Naive thymus-derived CD4-positive, alpha-beta T cell (primary cell): ENCODE measurements at regions of chr5 and their contacts with region 1.

Region 1: DNA sequence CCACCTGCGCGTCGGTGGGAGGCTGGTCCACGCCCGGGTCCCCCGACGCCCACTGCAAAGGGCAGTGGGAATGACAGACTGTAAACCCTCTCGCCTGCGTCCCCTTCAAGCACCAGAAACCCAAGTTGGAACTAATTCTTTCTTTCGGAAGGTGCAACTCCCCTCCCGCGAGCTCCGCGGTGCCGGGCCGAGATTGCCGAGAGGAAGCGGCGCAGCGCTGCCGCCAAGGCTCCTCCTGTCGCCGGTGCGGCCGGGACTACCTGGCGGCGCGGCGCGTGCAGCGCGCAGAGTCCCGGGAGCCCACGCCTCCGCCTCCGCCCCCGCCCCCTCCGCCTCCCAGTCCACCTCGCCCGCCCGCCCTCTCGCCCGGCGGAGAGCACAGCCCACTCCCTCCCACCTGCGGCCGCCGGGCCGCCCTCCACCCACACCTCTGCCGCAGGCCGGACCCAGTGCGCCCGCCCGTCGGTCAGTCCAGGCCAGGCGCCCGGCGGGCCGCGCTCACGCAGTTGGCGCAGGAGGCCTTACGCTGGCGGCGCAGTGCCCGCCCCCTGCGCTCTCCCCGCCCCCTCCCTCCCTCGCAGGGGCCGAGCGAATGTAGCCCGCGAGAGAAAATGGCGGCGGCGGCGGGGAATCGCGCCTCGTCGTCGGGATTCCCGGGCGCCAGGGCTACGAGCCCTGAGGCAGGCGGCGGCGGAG is at the start of gene MAP3K1:
- DNase-seq: peak; percentile 75 to 92 (median 86)
- ATAC-seq: peak; percentile 83
- H3K4me3 ChIP-seq: peak within 1 kb of the TSS; percentile 95
- H3K4me3 Mint-ChIP-seq: peak within 1 kb of the TSS; percentile 93 to 97 (median 95)
- H3K27ac ChIP-seq: peak within 1 kb of the TSS; percentile 83
- H3K27ac Mint-ChIP-seq: peak within 1 kb of the TSS; percentile 91 to 97 (median 93)
- H3K4me1 ChIP-seq: peaks cover 8 to 17% of the 10 kb centered on the region in 2 donors
- H3K4me1 Mint-ChIP-seq: peaks cover 23 to 47% (median 41%) of the 10 kb centered on the region in 7 donors
- H3K27me3 ChIP-seq: no peaks in the 10 kb centered on the region
- H3K27me3 Mint-ChIP-seq: peaks cover 0 to 6% (median 0%) of the 10 kb centered on the region in 5 donors
- total RNA-seq, gene MAP3K1: 54.4 to 85.4 (median 77.3) TPM

Region 2: GRCh38 chr5:56270568-56271392 is 544.3 kb before region 1 on chr5:
- CTCF ChIA-PET with region 1: interaction called, 3 read pairs
- POLR2A ChIA-PET with region 1: interaction called, 5 read pairs
- intact Hi-C with region 1: loop called (anchors 1 kb)
- DNase-seq: peak; percentile 47 to 73 (median 68)
- ATAC-seq: peak; percentile 97
- H3K4me3 ChIP-seq: no peak overlapping the region
- H3K4me3 Mint-ChIP-seq: peak overlapping the region; percentile 37 to 88 (median 76)
- H3K27ac ChIP-seq: no peak overlapping the region
- H3K27ac Mint-ChIP-seq: peak overlapping the region in 7 of 9 donors; percentile 44 to 86 (median 67)
- H3K4me1 ChIP-seq: peaks cover 0 to 9% of the 10 kb centered on the region in 2 donors
- H3K4me1 Mint-ChIP-seq: peaks cover 12 to 33% (median 21%) of the 10 kb centered on the region in 7 donors
- H3K27me3 ChIP-seq: no peaks in the 10 kb centered on the region
- H3K27me3 Mint-ChIP-seq: peaks cover 0 to 6% (median 0%) of the 10 kb centered on the region in 5 donors

Region 3: GRCh38 chr5:56610093-56610698 is 204.9 kb before region 1 on chr5:
- CTCF ChIA-PET with region 1: no interaction called
- POLR2A ChIA-PET with region 1: interaction called, 4 read pairs
- intact Hi-C with region 1: loop called in 1 of 2 experiments (anchors 5 kb)
- DNase-seq: peak in 1 of 9 donors; percentile 29
- ATAC-seq: peak; percentile 41
- H3K4me3 ChIP-seq: no peak overlapping the region
- H3K4me3 Mint-ChIP-seq: peak overlapping the region in 7 of 10 donors; percentile 12 to 80 (median 39)
- H3K27ac ChIP-seq: no peak overlapping the region
- H3K27ac Mint-ChIP-seq: peak overlapping the region in 8 of 9 donors; percentile 3 to 79 (median 74)
- H3K4me1 ChIP-seq: peaks cover 20 to 58% of the 10 kb centered on the region in 2 donors
- H3K4me1 Mint-ChIP-seq: peaks cover 56 to 93% (median 89%) of the 10 kb centered on the region in 7 donors
- H3K27me3 ChIP-seq: no peaks in the 10 kb centered on the region
- H3K27me3 Mint-ChIP-seq: no peaks in the 10 kb centered on the region

Region 4: DNA sequence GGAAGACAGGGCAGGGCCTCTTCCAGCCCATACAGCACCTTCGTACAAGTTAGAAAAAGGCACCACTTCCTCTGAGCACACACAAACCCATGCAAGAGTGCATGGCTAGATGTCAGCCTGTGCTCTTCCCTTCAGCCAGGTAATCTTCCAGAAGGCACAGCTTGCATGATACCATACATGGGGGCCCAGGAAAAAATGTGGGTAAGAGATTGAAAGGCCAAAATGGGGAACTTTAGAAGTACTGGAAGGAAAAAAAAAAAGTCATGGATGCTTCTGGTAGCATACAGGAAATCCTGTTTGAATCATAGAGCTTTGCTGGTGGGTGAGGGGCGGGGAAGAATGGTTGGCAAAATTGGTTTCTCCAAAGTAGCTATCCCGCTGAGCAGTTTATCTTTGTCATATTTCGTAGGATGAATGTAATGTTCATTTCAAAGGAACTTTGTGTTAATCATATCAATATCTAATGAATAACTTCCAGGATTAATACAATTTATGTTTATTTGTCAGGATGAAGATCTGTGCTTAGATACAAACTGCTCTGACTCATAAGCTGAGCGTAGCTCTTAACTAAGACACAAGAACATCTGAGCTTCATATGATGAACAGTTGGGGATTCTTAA is 78.0 kb before region 1 on chr5:
- CTCF ChIA-PET with region 1: interaction called, 3 read pairs
- POLR2A ChIA-PET with region 1: interaction called, 4 read pairs
- intact Hi-C with region 1: loop called (anchors 2 to 5 kb)
- DNase-seq: peak in 1 of 9 donors; percentile 6
- ATAC-seq: peak; percentile 57
- H3K4me3 ChIP-seq: peak overlapping the region; percentile 28
- H3K4me3 Mint-ChIP-seq: peak overlapping the region; percentile 50 to 88 (median 67)
- H3K27ac ChIP-seq: peak overlapping the region; percentile 68
- H3K27ac Mint-ChIP-seq: peak overlapping the region; percentile 74 to 94 (median 89)
- H3K4me1 ChIP-seq: peaks cover 14 to 29% of the 10 kb centered on the region in 2 donors
- H3K4me1 Mint-ChIP-seq: peaks cover 40 to 64% (median 51%) of the 10 kb centered on the region in 7 donors
- H3K27me3 ChIP-seq: no peaks in the 10 kb centered on the region
- H3K27me3 Mint-ChIP-seq: peaks cover 0 to 2% (median 0%) of the 10 kb centered on the region in 5 donors

Region 5: DNA sequence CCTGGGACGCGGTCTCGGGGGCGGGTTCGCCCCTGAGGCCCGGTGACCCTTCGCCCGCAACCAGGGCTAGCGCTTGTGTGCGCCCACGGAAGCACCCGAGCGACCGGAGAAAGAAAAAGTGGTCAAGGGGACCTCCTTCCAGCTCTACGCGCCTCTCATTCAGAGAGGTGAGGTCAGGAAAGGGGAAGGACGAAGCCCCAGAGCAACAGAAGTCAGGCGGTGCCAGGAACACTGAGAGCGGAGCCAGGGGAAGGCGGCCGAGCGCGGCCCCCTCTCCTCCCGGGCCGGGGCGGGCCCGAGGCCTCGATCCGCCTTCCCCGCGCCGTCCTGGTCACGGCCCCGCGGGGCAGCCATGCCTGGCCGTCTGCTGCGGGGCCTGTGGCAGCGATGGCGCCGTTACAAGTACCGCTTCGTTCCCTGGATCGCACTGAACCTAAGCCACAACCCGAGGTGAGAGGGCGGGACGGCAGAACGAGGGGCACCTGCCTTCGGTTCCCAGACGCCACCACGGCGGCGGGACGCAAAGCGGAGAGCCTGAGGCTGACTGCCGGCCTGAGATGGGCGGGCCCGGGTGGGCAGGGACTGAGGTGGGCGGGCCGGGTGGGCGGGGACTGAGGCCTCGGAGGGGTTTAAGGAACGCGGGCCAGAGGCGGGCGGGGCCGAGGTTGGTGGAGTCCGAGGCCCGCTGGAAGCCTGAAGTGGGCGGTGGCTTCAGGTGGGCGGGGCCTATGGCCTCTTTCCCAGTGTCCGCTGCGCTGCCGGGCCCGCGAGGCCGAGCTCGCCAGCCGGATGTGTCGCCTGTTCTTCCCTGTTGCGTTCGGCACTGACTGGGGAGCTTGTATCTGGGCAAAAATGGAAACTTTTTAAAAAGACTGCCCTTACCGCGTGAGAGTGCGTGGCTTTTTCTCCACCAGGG is 94.4 kb after region 1 on chr5 and contains the start of gene SETD9:
- CTCF ChIA-PET with region 1: no interaction called
- POLR2A ChIA-PET with region 1: no interaction called
- intact Hi-C with region 1: loop called (anchors 1 to 2 kb)
- DNase-seq: peak; percentile 67 to 94 (median 73)
- ATAC-seq: peak; percentile 90
- H3K4me3 ChIP-seq: peak within 1 kb of the TSS; percentile 75
- H3K4me3 Mint-ChIP-seq: peak within 1 kb of the TSS; percentile 88 to 100 (median 91)
- H3K27ac ChIP-seq: peak within 1 kb of the TSS; percentile 79
- H3K27ac Mint-ChIP-seq: peak within 1 kb of the TSS; percentile 81 to 97 (median 89)
- H3K4me1 ChIP-seq: no peaks in the 10 kb centered on the region
- H3K4me1 Mint-ChIP-seq: peaks cover 12 to 24% (median 21%) of the 10 kb centered on the region in 7 donors
- H3K27me3 ChIP-seq: no peaks in the 10 kb centered on the region
- H3K27me3 Mint-ChIP-seq: peaks cover 0 to 15% (median 0%) of the 10 kb centered on the region in 5 donors
- total RNA-seq, gene SETD9: 3.7 to 9.7 (median 6.6) TPM